Posterior vena cava (tissue), 2 donors: ENCODE measurements at regions of chr5 and their contacts with region 1.

Region 1: GRCh38 chr5:85990998-85991397 is 626.7 kb upstream of the COX7C start:
- DNase-seq: no peak

Region 2: DNA sequence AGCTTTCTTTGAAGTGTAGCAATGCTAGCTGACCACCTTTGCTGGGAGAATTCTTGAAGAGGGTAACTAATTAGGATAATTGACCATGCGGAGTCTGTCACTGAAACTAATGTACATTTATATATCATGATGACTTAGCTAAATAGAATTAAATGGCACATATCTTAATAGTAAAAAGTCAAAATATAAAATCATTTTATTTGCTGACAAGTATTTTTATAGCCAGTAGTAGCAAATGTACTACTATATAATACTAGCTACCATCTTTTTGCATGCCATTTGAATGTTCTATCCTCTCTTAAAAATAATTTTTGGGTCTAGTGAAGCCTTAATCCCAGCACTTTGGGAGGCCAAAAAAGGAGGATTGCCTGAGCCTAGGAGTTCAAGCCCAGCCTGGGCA is 20.9 kb after region 1 on chr5:
- intact Hi-C with region 1: loop called in 1 of 2 experiments (anchors 1 kb)
- DNase-seq: no peak